ENCODE measurements at regions of chr2 and their contacts with region 1.

Region 1: DNA sequence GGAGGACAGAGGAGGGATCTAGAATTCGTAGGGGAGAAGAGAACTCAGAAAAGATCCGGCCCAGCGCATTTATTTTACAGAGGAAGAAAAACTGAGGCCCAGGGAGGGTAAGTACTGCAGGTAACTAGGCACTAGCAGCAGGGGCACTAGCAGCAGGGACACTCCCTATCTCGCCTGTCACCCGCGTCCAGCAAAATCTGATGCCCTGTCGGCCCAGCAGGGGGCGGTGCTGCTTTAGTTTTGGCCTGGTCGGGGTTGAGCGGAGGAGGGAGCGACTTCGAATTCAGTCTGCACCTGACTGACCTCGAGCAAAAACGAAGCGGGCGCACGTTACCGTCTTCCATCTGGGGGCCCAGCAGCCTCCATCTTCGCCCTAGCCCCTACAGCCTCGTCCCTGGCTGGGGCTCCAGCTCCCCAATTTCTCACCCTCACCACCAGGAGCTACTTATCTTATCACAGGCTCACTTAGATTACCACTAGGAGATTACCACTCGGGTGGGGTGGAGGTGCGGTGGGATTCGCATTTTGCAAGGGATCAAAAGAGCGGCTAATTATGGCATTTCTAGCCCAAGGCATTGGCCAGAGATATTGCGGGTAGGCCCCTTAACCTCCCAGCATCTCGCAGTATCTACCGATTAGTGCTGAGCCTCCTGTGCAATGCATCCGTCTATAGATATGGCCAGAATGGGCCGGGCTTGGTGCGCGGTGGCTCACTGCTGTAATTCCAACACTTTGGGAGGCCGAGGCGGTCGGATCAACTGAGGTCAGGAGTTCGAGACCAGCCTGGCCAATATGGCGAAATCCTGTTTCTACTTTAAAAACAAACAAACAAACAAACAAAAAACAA is 17.8 kb upstream of the CD8A start:
- DNase-seq: peak; percentile 98
- ATAC-seq: peak; percentile 72
- H3K4me3 Mint-ChIP-seq: peak overlapping the region; percentile 87
- H3K27ac Mint-ChIP-seq: peak overlapping the region; percentile 90
- H3K4me1 Mint-ChIP-seq: peaks cover 45% of the 10 kb centered on the region
- H3K27me3 Mint-ChIP-seq: no peaks in the 10 kb centered on the region
- CTCF ChIP-seq: peak; percentile 86

Region 2: DNA sequence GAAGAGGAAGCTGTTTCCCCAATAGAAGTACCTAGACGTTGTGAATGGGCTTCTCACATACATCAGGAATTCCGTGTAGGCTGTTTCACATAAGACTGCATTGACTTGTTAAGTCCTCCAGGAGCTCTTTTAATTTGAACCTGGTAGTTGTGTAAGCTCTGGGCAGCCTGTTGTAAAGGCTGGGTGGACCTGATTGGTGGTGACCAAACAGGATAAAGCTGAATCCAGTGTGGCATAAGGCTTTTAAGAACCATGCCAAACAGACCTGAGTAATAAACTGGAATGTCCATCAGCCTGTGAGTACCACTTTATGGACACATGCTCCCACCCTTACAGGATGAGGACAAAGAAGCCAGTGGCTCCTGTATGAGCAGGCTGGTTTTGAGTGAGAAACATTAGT is 64.4 kb before region 1 on chr2:
- CTCF ChIA-PET with region 1: no interaction called
- POLR2A ChIA-PET with region 1: no interaction called
- intact Hi-C with region 1: no loop called
- DNase-seq: no peak
- ATAC-seq: no peak
- H3K4me3 Mint-ChIP-seq: no peak overlapping the region
- H3K27ac Mint-ChIP-seq: no peak overlapping the region
- H3K4me1 Mint-ChIP-seq: peaks cover 42% of the 10 kb centered on the region
- H3K27me3 Mint-ChIP-seq: no peaks in the 10 kb centered on the region
- CTCF ChIP-seq: no peak

Region 3: DNA sequence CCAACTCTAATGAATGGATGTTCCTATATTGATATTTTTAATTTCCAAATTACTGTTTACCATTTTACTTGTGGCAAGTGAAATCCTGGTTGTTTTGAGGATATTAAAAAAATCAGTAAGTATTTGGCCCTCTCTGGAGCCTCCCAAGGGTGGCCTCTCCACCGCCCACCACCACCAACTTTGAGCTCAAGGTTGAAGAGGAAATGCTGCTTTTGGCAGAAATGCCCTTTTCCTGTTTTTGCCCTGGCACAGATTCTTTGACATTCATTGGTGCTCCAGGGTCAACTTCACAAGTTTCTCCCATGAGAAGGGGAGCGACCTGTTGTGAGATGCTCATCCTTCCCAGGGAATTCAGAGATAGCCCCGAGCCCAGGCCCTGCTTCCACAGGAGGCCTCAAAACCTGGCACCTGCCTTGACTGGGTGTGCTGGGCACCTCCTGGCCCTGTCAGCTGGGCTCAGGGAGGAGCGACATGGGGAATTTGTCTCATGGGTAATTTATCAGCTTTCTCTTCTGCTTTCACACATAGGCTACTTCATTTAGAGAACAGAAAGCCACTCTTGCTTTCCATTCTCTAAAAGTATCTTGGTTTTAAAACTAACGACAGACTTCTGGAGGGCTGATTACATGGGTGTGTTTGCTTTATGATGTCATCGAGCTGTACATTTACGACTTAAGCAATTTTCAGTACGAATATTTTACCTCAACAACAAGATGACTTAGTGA is 24.8 kb before region 1 on chr2:
- CTCF ChIA-PET with region 1: interaction called, 13 read pairs
- POLR2A ChIA-PET with region 1: interaction called, 156 read pairs
- intact Hi-C with region 1: no loop called
- DNase-seq: peak; percentile 67
- ATAC-seq: peak; percentile 4
- H3K4me3 Mint-ChIP-seq: peak overlapping the region; percentile 60
- H3K27ac Mint-ChIP-seq: peak overlapping the region; percentile 96
- H3K4me1 Mint-ChIP-seq: peaks cover 61% of the 10 kb centered on the region
- H3K27me3 Mint-ChIP-seq: no peaks in the 10 kb centered on the region
- CTCF ChIP-seq: no peak

Region 4: DNA sequence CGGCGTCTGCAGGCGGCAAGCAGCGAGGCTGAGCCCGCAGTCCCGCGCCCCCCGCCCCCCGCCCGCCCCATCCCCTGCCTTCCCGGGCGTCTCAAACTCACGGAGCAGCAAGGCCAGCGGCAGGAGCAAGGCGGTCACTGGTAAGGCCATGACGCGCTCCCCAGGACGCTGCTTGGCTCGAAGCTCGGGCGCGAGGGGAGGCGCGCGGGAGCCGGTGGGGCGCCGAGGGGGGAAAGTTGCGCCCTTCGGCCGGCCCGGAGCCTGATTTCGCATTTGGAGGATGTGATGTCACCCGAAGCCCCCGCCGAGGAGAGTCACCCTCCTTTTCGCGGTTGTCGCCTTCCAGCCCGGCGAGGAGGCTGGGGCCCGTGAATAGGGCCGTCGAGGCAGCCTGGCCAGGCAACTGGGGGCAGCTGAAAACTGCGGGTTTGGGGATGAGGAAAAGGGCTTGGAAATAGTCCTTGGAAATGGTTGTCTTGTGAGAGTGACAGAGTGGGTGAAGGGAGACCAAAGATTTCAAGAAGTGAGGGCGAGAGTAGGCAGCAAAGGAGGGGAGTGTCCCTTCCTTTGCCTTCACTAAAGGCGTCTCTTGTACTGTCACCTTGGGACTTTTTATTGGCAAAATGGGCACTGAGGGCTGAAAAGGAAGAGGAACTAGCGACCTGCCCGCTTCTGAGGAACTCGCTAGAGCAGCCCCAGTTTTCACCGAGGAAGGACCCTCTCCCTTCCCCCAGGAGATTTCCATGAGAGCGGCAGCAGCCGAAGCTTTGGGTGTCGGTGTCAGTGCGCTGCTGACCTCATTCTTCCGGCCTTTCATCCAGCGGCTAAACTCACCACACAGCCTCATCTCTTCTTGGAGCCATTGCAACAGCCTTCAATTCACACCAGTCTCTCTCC is 17.6 kb before region 1 on chr2 and contains the start of gene CD8A:
- CTCF ChIA-PET with region 1: interaction called, 37 read pairs
- POLR2A ChIA-PET with region 1: interaction called, 156 read pairs
- intact Hi-C with region 1: loop called (anchors 1 kb)
- DNase-seq: peak; percentile 91
- ATAC-seq: peak; percentile 32
- H3K4me3 Mint-ChIP-seq: peak within 1 kb of the TSS; percentile 96
- H3K27ac Mint-ChIP-seq: peak within 1 kb of the TSS; percentile 100
- H3K4me1 Mint-ChIP-seq: peaks cover 47% of the 10 kb centered on the region
- H3K27me3 Mint-ChIP-seq: no peaks in the 10 kb centered on the region
- CTCF ChIP-seq: no peak
- total RNA-seq, gene CD8A: 419 to 432 TPM